Mammary epithelial cell (primary cell): ENCODE measurements at regions of chr18 and their contacts with region 1.

Region 1: GRCh38 chr18:2589345-2590068 is 18.1 kb downstream of the NDC80 start:
- DNase-seq: peak; percentile 88
- H3K4me3 ChIP-seq: peak overlapping the region in 2 of 3 experiments; percentile 39 to 48
- H3K27ac ChIP-seq: peak overlapping the region; percentile 99
- H3K4me1 ChIP-seq: peaks cover 30% of the 10 kb centered on the region
- H3K27me3 ChIP-seq: no peaks in the 10 kb centered on the region
- CTCF ChIP-seq: peak in 1 of 2 donors; percentile 1

Region 2: GRCh38 chr18:2480575-2480974 is 108.9 kb before region 1 on chr18:
- CTCF ChIA-PET with region 1: no interaction called
- dilution Hi-C with region 1: no loop called
- in situ Hi-C with region 1: no loop called
- intact Hi-C with region 1: no loop called
- DNase-seq: no peak
- H3K4me3 ChIP-seq: no peak overlapping the region
- H3K27ac ChIP-seq: no peak overlapping the region
- H3K4me1 ChIP-seq: no peaks in the 10 kb centered on the region
- H3K27me3 ChIP-seq: no peaks in the 10 kb centered on the region
- CTCF ChIP-seq: no peak

Region 3: DNA sequence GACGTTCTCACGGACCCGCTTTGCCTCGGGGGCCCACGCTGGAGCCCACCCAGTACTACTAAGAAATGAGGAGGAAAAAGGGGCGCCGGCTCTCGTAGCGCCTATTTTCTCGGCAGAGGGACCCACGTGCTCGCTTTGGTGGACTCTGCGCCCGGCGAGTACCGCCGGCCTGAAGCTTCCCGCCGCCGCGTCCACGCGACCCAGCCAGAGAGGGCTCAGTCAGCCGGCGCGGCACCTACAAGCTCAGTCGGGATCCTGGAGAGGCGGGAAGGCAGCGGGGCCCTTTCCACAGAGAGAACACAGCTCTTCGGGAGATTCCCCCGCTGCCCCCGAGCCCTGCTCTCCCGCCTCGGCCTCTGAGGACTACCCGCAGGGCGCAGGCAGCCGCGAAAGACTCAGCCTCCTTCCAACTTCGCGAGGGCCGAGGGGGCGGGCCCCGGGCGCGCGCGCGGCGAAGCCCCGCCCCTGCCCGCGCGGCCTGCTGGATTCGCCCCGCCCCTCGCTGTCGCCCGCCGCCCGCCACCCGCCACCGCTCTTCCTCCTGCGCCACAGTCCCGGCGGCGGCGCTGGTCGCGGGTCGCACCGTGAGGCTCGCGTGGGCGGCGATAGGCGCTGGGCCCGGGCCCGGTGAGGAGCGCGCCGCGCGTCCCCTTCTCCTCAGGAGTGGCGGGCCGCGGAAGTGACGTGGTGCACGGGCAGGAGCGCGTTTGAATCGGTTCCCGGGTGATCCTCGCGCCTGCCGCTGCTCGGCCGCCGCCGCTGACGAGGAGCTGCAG is 65.9 kb after region 1 on chr18 and contains the start of gene SMCHD1:
- CTCF ChIA-PET with region 1: no interaction called
- dilution Hi-C with region 1: no loop called
- in situ Hi-C with region 1: no loop called
- intact Hi-C with region 1: loop called (anchors 5 kb)
- DNase-seq: peak; percentile 83
- H3K4me3 ChIP-seq: peak within 1 kb of the TSS; percentile 70 to 88 (median 81)
- H3K27ac ChIP-seq: peak within 1 kb of the TSS; percentile 83
- H3K4me1 ChIP-seq: peaks cover 12% of the 10 kb centered on the region
- H3K27me3 ChIP-seq: no peaks in the 10 kb centered on the region
- CTCF ChIP-seq: no peak
- total RNA-seq, gene SMCHD1: 44.4 to 56.8 TPM